RWPE1 (cell line): ENCODE measurements at regions of chrX and their contacts with region 1.

Region 1: GRCh38 chrX:133792198-133792953 is 193.0 kb downstream of the GPC3 start:
- DNase-seq: peak; percentile 54
- H3K27ac ChIP-seq: no peak overlapping the region
- CTCF ChIP-seq: peak; percentile 80

Region 2: GRCh38 chrX:133402042-133402453 is 390.3 kb before region 1 on chrX:
- CTCF ChIA-PET with region 1: no interaction called
- POLR2A ChIA-PET with region 1: no interaction called
- DNase-seq: no peak
- H3K27ac ChIP-seq: no peak overlapping the region
- CTCF ChIP-seq: no peak

Region 3: GRCh38 chrX:134026565-134027311 is 234.4 kb after region 1 on chrX:
- CTCF ChIA-PET with region 1: interaction called, 10 read pairs
- POLR2A ChIA-PET with region 1: no interaction called
- DNase-seq: peak; percentile 10
- H3K27ac ChIP-seq: no peak overlapping the region
- CTCF ChIP-seq: peak; percentile 31